CD8-positive, alpha-beta memory T cell (primary cell): ENCODE measurements at regions of chr2 and their contacts with region 1.

Region 1: GRCh38 chr2:234463626-234464290 is 33.1 kb downstream of the ARL4C start:
- DNase-seq: peak; percentile 52 to 85 (median 83)
- H3K4me3 ChIP-seq: peak overlapping the region; percentile 41
- H3K4me3 Mint-ChIP-seq: peak overlapping the region; percentile 18 to 86 (median 68)
- H3K27ac ChIP-seq: peak overlapping the region; percentile 68
- H3K27ac Mint-ChIP-seq: peak overlapping the region; percentile 89 to 100 (median 96)
- H3K4me1 ChIP-seq: peaks cover 65% of the 10 kb centered on the region
- H3K4me1 Mint-ChIP-seq: peaks cover 58 to 78% (median 75%) of the 10 kb centered on the region in 3 donors
- H3K27me3 ChIP-seq: no peaks in the 10 kb centered on the region
- H3K27me3 Mint-ChIP-seq: no peaks in the 10 kb centered on the region

Region 2: DNA sequence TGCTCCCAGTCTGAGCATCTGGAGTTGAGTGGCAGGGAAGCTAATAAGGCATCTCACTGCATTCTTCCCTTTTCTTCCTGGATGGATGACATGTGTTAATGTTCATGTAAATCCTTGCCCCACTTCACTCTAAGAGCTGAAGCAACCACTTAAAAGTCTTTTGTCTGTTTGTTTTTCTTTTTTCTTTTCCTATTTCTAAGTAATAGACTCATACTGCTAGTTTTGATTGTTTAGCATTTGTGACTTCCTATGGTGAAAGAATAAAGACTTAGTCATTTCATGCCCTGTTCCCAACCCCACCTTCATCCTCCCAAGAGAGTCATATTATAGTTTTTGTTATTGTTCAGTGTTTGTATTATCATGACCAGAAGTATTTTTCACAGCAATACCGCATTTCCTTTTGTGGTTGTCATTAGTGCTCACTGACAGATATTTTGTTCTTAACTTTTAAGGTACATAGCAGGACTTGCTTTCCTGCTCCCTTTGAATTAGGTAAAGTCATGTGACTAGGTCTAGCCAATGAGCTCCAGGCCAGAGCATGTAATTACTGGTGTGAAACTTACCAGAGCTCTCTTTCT is 431.4 kb before region 1 on chr2:
- CTCF ChIA-PET with region 1: no interaction called
- POLR2A ChIA-PET with region 1: no interaction called
- DNase-seq: peak in 4 of 5 donors; percentile 30 to 85 (median 52)
- H3K4me3 ChIP-seq: no peak overlapping the region
- H3K4me3 Mint-ChIP-seq: peak overlapping the region; percentile 0 to 53 (median 24)
- H3K27ac ChIP-seq: no peak overlapping the region
- H3K27ac Mint-ChIP-seq: peak overlapping the region; percentile 31 to 87 (median 70)
- H3K4me1 ChIP-seq: peaks cover 46% of the 10 kb centered on the region
- H3K4me1 Mint-ChIP-seq: peaks cover 59 to 68% (median 62%) of the 10 kb centered on the region in 3 donors
- H3K27me3 ChIP-seq: no peaks in the 10 kb centered on the region
- H3K27me3 Mint-ChIP-seq: no peaks in the 10 kb centered on the region

Region 3: GRCh38 chr2:234074751-234075517 is 388.8 kb before region 1 on chr2:
- CTCF ChIA-PET with region 1: no interaction called
- POLR2A ChIA-PET with region 1: interaction called, 12 read pairs
- DNase-seq: no peak
- H3K4me3 ChIP-seq: no peak overlapping the region
- H3K4me3 Mint-ChIP-seq: no peak overlapping the region
- H3K27ac ChIP-seq: no peak overlapping the region
- H3K27ac Mint-ChIP-seq: peak overlapping the region in 2 of 8 donors; percentile 11 to 56
- H3K4me1 ChIP-seq: peaks cover 31% of the 10 kb centered on the region
- H3K4me1 Mint-ChIP-seq: peaks cover 52 to 68% (median 63%) of the 10 kb centered on the region in 3 donors
- H3K27me3 ChIP-seq: no peaks in the 10 kb centered on the region
- H3K27me3 Mint-ChIP-seq: peaks cover 0 to 2% of the 10 kb centered on the region in 2 donors

Region 4: DNA sequence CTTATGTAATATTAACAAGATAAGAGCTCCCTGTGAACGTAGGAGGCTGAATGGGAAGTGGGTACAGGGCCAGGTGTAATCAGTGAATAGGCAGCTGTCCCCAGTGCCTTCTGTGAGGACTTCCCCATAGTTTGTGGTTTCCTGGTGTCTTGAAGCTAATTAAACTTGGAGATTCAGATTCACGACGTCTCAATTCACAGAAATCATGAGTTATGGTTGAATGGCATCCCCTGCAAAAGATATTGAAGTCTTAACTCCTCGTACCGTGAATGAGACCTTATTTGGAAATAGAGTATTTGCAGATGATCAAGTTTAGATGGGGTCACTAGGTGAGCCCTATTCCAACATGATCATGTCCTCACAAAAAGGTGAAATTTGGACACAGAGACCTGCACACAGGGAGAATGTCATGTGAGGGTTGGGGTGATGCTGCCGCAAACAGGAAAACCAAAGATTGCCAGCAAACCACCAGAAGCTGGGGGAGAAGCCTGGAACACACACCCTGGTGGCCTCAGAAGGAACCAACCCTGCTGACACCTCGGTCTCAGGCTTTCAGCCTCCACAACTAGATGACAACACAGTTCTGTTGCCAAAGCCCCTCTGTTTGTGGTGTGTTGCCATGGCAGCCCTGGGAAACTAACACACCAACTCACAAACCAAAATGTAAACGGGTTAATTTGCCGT is 20.0 kb after region 1 on chr2:
- CTCF ChIA-PET with region 1: interaction called, 17 read pairs
- POLR2A ChIA-PET with region 1: interaction called, 10 read pairs
- DNase-seq: peak; percentile 74 to 92 (median 89)
- H3K4me3 ChIP-seq: peak overlapping the region; percentile 3
- H3K4me3 Mint-ChIP-seq: peak overlapping the region; percentile 74 to 88 (median 75)
- H3K27ac ChIP-seq: peak overlapping the region; percentile 84
- H3K27ac Mint-ChIP-seq: peak overlapping the region; percentile 94 to 100 (median 98)
- H3K4me1 ChIP-seq: peaks cover 69% of the 10 kb centered on the region
- H3K4me1 Mint-ChIP-seq: peaks cover 72 to 96% (median 96%) of the 10 kb centered on the region in 3 donors
- H3K27me3 ChIP-seq: no peaks in the 10 kb centered on the region
- H3K27me3 Mint-ChIP-seq: peaks cover 0 to 2% of the 10 kb centered on the region in 2 donors